AG04449 (cell line): ENCODE measurements at regions of chr9 and their contacts with region 1.

Region 1: GRCh38 chr9:98775831-98776441 is 20.4 kb downstream of the ANKS6 start:
- DNase-seq: peak; percentile 24
- H3K4me3 ChIP-seq: no peak overlapping the region
- CTCF ChIP-seq: peak; percentile 78

Region 2: DNA sequence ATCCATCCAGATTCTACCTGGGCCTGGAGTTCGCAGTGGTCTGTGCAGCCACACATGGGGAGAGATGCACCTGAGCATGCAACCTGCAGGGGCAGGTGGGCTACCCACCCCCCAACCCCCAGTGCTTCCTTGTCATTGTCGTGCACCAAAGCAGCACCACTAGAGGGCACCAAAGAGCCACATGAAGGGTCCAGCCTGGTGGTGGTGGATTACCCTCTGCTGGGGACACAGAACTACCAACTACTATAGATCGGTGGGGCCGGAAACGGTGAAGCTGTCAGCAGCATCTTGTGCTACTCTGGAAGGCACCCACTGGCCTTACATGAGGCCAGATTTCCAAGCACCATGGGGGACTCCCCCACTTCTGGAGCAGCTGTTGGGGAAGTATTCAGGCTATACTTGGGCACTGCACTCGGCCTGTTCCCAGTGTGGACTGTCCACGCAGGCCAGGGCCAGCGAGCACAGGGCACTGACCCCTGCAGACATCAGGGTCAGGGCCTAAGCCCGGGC is 460.3 kb before region 1 on chr9:
- CTCF ChIA-PET with region 1: interaction called, 207 read pairs
- POLR2A ChIA-PET with region 1: no interaction called
- DNase-seq: no peak
- H3K4me3 ChIP-seq: no peak overlapping the region
- CTCF ChIP-seq: peak; percentile 94

Region 3: DNA sequence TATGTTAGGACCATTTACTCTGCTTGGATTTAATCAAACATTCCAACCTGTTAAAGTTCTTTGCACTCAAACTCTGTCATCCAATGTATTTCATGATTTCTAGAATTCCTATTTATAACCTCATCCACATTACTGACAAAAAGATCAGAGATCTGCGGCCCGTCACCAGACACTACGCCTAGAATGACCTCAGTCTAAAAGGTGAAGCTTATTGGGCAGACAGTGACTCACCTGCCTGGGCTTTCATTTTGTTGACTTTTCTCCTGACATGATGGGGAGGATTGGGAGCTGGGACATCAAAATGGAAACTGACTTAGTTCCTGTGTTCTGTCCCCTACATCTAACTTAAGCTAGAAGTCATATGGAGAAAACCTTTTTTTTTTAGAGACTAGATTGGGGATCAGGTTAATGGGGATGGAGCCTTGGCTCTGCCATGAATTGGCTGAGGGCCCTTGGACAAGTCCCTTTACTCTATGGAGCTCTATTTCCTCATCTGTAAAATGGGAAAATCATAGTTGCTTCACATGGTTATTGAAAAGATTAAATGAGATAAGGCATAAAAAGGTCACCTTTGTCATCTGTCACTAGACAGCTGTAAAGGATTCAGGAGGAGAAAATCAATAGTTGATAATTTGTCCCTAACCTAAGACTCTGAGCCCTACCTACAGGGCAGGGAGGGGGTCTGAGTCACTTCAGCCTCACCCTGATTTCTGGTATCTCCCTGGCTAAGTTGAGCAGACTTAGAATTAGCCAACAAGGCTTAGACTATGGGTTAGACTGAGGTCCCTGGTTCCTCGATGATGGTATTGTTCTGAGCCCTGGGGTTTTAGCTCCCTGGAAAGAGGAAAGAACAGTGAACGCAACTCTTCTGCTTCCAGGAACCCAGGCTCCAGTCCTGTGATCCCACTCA is 295.7 kb before region 1 on chr9:
- CTCF ChIA-PET with region 1: interaction called, 13 read pairs
- POLR2A ChIA-PET with region 1: no interaction called
- DNase-seq: no peak
- H3K4me3 ChIP-seq: no peak overlapping the region
- CTCF ChIP-seq: no peak

Region 4: DNA sequence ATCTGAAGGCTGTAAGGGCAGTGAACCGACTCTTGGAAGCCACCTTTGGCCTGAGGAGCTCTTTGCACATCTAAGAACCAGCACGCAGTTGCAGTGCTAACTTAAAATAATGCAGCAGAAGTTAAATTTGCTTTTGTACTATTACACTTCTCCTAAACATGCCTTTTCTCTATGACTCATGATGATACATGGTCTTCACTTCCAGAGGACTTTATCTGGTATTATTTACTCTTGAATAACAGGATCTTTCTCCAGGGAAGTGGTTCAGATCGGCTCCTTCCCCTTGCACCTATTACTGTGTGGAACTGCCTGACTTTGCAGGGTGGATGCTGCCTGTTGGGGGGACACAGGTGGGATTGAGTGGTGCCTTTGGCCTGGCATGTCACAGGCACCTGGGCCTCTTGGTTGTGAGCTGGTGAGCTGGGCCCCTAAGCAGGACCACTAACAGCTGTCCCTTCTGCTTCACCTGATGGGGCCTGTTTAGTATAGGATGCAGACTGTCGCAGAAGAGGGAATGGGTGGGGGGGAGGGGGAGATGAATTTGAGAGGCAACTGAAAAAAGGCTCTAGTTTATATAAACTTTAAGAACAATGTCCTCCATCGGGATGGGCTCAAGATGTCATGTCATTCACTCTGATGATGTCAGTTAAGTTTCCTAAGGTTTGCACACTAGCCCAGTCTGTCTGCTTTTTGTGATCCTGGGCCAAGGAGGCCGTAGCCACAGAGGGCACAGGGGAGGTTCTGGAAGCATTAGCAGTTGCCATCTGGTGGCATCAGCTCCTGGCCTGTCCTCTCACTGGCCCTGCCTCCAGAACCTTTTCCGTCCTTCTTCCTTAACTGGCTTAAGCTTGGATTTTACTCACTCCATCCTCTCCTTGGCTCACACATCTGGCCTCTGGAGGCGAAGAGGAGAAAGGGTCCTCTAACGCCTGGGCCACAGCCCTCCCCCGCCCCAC is 33.3 kb before region 1 on chr9:
- CTCF ChIA-PET with region 1: interaction called, 31 read pairs
- POLR2A ChIA-PET with region 1: no interaction called
- DNase-seq: peak; percentile 4
- H3K4me3 ChIP-seq: no peak overlapping the region
- CTCF ChIP-seq: no peak

Region 5: GRCh38 chr9:98796364-98797101 is 20.6 kb after region 1 on chr9 and contains the start of gene ANKS6:
- CTCF ChIA-PET with region 1: interaction called, 202 read pairs
- POLR2A ChIA-PET with region 1: no interaction called
- DNase-seq: no peak
- H3K4me3 ChIP-seq: peak within 1 kb of the TSS; percentile 67
- CTCF ChIP-seq: peak; percentile 57